Gastrocnemius medialis (tissue), 4 donors: ENCODE measurements at regions of chr5 and their contacts with region 1.

Region 1: GRCh38 chr5:120457839-120458507 is 6.1 kb upstream of the PRR16 start:
- DNase-seq: peak; percentile 57 to 73
- ATAC-seq: peak; percentile 38 to 61
- H3K4me3 ChIP-seq: peak overlapping the region; percentile 11 to 51 (median 36)
- H3K27ac ChIP-seq: peak overlapping the region in 1 of 4 donors; percentile 30
- H3K4me1 ChIP-seq: peaks cover 10 to 19% of the 10 kb centered on the region in 2 donors
- H3K27me3 ChIP-seq: no peaks in the 10 kb centered on the region
- CTCF ChIP-seq: peak; percentile 54 to 71 (median 60)
- POLR2A ChIP-seq: no peak

Region 2: GRCh38 chr5:119452373-119453039 is 1005.5 kb before region 1 on chr5 and contains the start of gene HSD17B4:
- in situ Hi-C with region 1: loop called in 1 of 4 experiments (anchors 25 kb)
- intact Hi-C with region 1: no loop called
- DNase-seq: peak; percentile 77 to 85
- ATAC-seq: peak; percentile 97 to 98
- H3K4me3 ChIP-seq: peak within 1 kb of the TSS; percentile 71 to 93 (median 79)
- H3K27ac ChIP-seq: peak within 1 kb of the TSS; percentile 85 to 97 (median 87)
- H3K4me1 ChIP-seq: peaks cover 12 to 14% of the 10 kb centered on the region in 2 donors
- H3K27me3 ChIP-seq: no peaks in the 10 kb centered on the region
- CTCF ChIP-seq: no peak
- POLR2A ChIP-seq: peak; percentile 58 to 69
- total RNA-seq, gene HSD17B4: 60.9 to 200 (median 83.1) TPM

Region 3: DNA sequence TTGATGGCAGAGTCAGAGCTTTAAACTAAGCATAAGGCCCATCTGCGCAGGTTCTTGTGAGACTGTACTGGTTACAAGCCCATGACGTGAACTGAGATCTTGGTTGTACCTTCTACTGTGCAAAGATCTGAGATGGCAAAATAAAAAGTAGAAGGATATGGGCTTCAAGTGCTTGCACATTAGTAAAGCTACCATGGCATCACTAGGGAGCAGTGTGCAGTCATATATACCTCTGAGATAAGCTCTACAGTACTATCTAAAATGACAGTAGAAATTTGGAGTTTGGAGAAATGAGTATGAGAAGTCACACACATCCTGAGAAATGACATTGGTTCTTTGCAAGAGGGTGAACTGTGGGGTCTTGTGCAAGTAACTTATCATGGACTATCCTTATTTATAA is 402.1 kb before region 1 on chr5:
- in situ Hi-C with region 1: loop called in 2 of 4 experiments (anchors 25 kb)
- intact Hi-C with region 1: loop called (anchors 5 kb)
- DNase-seq: no peak
- ATAC-seq: peak; percentile 60 to 66
- H3K4me3 ChIP-seq: no peak overlapping the region
- H3K27ac ChIP-seq: peak overlapping the region in 1 of 4 donors; percentile 76
- H3K4me1 ChIP-seq: peaks cover 13 to 20% of the 10 kb centered on the region in 2 donors
- H3K27me3 ChIP-seq: no peaks in the 10 kb centered on the region
- CTCF ChIP-seq: peak in 1 of 5 experiments; percentile 11
- POLR2A ChIP-seq: no peak

Region 4: GRCh38 chr5:120252839-120253238 is 205.1 kb before region 1 on chr5:
- in situ Hi-C with region 1: no loop called
- intact Hi-C with region 1: no loop called
- DNase-seq: no peak
- ATAC-seq: no peak
- H3K4me3 ChIP-seq: no peak overlapping the region
- H3K27ac ChIP-seq: no peak overlapping the region
- H3K4me1 ChIP-seq: no peaks in the 10 kb centered on the region
- H3K27me3 ChIP-seq: no peaks in the 10 kb centered on the region
- CTCF ChIP-seq: no peak
- POLR2A ChIP-seq: no peak

Region 5: GRCh38 chr5:120436996-120437395 is 21.0 kb before region 1 on chr5:
- in situ Hi-C with region 1: no loop called
- intact Hi-C with region 1: no loop called
- DNase-seq: no peak
- ATAC-seq: no peak
- H3K4me3 ChIP-seq: no peak overlapping the region
- H3K27ac ChIP-seq: no peak overlapping the region
- H3K4me1 ChIP-seq: peaks cover 24 to 34% of the 10 kb centered on the region in 2 donors
- H3K27me3 ChIP-seq: no peaks in the 10 kb centered on the region
- CTCF ChIP-seq: no peak
- POLR2A ChIP-seq: no peak